ENCODE measurements at regions of chr1 and their contacts with region 1.

Region 1: GRCh38 chr1:221263831-221264767 is 384.9 kb downstream of the HLX start:
- DNase-seq: peak; percentile 56
- H3K4me3 ChIP-seq: no peak overlapping the region
- H3K27ac ChIP-seq: no peak overlapping the region
- H3K27me3 ChIP-seq: peaks cover 2% of the 10 kb centered on the region
- CTCF ChIP-seq: peak; percentile 64

Region 2: DNA sequence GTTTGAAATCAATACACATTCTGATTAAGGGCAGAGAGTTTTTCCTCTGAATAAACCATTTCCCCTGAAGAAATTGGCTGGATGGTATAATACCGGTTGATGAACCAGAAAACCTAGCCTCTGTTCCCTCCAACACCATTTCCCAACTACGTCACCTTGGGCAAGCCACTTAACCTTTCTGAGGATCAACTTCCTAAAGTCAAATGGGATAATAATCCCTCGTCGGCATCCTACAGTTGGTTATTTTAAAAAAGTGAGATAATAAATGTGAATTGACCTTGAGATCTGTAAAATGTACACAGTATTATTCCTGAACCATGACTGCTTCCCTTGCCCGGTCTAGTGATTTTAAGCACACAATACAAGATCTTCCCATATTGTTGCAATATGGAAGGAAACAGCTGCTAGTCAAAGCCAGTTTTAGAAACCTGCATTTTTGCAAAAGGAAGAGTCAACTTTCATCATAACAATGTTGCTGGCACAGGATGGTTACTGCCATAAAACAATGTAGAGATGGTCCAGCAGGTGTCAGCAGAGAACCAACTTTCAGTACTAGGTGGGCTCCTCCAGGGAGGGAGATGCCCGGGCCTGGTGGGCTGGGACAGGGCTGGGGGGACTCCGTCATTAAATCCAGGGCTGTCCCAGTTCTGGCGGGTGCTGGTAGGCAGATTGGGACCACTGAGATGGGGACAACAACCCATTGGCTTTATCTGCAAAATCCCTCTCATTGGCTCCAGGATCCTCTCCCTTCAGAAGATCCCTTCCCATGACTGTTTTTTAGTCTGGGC is 390.0 kb before region 1 on chr1:
- CTCF ChIA-PET with region 1: interaction called, 13 read pairs
- POLR2A ChIA-PET with region 1: no interaction called
- DNase-seq: no peak
- H3K4me3 ChIP-seq: no peak overlapping the region
- H3K27ac ChIP-seq: no peak overlapping the region
- H3K27me3 ChIP-seq: no peaks in the 10 kb centered on the region
- CTCF ChIP-seq: peak; percentile 76

Region 3: DNA sequence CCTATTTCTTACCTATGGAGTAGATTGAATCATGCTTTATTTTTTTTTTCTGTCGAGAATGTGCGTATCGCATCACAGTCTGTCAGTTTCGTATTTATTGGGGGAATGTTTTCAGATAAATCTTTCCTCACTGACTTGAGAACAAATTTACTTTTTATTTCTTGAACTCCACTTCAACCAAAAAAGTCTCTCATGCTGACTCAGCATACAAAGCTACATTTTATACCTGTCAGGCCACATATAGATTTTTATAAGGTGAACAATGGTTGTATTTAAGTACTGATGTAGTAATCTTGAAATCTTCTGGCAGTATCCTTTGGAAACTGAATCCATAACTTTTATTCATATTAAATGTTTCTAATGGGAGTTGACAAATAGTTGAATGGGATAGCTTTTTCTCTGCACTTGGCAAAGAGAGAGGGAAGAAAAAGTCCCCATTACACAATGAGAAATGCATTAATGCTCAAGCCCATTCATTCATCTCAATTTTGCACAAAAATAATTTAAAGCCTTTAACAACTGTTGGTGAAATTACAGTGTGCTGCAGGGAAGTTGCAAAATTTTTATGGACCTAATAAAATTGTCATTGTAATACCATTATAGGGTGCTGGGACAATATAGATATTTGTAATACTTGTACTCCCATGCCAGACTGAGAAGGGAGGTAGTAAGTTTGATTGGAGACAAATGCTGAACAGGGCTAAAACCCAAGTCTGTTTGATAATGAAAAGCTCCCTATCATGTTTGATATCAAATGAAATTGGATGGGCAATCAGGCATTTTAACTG is 17.3 kb before region 1 on chr1:
- CTCF ChIA-PET with region 1: interaction called, 14 read pairs
- POLR2A ChIA-PET with region 1: no interaction called
- DNase-seq: no peak
- H3K4me3 ChIP-seq: no peak overlapping the region
- H3K27ac ChIP-seq: no peak overlapping the region
- H3K27me3 ChIP-seq: no peaks in the 10 kb centered on the region
- CTCF ChIP-seq: no peak

Measured in AG04450 (cell line).